Cardiac septum (tissue), 1 donor: ENCODE measurements at regions of chr13 and their contacts with region 1.

Region 1: GRCh38 chr13:43786773-43787517 is at the start of gene ENOX1:
- DNase-seq: peak; percentile 81
- total RNA-seq, gene ENOX1: 6.6 TPM

Region 2: GRCh38 chr13:43303033-43303729 is 483.8 kb before region 1 on chr13:
- intact Hi-C with region 1: loop called (anchors 5 kb)
- DNase-seq: no peak

Region 3: DNA sequence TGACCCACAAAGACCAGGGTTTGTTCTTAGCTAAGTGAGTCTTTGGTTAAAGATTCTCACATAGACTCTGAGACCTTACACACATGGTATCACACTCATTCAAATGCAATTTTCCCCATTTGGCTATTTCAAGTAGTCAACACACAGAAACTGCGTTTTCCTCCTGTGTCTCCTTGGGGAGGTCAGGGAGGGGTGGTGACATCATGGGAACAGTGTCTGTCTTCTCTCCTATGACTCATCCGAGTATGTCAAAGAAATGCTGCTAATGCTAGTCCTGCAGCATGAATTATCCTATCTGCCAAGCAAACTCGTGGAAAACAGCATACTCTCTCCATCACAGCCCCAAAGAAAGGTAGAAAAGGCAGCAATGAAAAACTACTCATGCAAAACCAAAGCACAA is 100.4 kb before region 1 on chr13:
- intact Hi-C with region 1: loop called (anchors 5 kb)
- DNase-seq: no peak

Region 4: GRCh38 chr13:43924549-43925245 is 137.8 kb after region 1 on chr13:
- intact Hi-C with region 1: no loop called
- DNase-seq: no peak